ENCODE measurements at regions of chr3 and their contacts with region 1.

Region 1: GRCh38 chr3:31531992-31532586 is 636 bp upstream of the STT3B start:
- DNase-seq: peak; percentile 98
- H3K4me3 ChIP-seq: peak overlapping the region; percentile 79 to 95
- H3K27ac ChIP-seq: peak overlapping the region; percentile 96 to 99
- H3K4me1 ChIP-seq: peaks cover 3 to 10% of the 10 kb centered on the region in 2 experiments; a peak in 1 of 4 replicates
- H3K27me3 ChIP-seq: no peaks in the 10 kb centered on the region
- CTCF ChIP-seq: no peak; the same call in 1 of the 2 replicates
- EP300 ChIP-seq: peak; percentile 2 to 9; a peak in 1 of 4 replicates
- RAD21 ChIP-seq: no peak; the same call in 1 of the 2 replicates

Region 2: GRCh38 chr3:31472479-31473390 is 59.4 kb before region 1 on chr3:
- CTCF ChIA-PET with region 1: no interaction called
- POLR2A ChIA-PET with region 1: no interaction called
- DNase-seq: no peak
- H3K4me3 ChIP-seq: no peak overlapping the region
- H3K27ac ChIP-seq: no peak overlapping the region
- H3K4me1 ChIP-seq: no peaks in the 10 kb centered on the region
- H3K27me3 ChIP-seq: no peaks in the 10 kb centered on the region
- CTCF ChIP-seq: no peak
- EP300 ChIP-seq: no peak
- RAD21 ChIP-seq: no peak

Region 3: DNA sequence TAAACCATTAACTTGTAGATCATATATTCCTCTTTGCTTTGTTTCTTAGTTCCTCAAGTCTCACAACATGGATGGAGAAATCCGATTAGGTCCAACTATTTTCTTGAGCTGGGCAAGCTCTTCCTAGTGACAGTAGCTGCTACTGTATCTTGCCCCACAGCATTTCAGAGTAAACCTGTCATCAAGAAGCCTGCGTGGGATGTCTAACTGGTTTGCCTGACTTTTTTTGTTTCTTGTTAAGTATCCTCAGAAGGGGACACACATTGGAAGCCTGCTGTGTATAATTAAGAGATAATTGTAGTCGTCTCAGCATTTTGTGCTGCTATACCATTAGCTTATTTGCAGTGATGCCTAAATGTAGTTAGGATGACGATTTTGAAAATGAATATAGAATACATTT is 28.6 kb before region 1 on chr3:
- CTCF ChIA-PET with region 1: interaction called, 3 read pairs
- POLR2A ChIA-PET with region 1: interaction called, 13 read pairs
- DNase-seq: no peak
- H3K4me3 ChIP-seq: no peak overlapping the region
- H3K27ac ChIP-seq: no peak overlapping the region
- H3K4me1 ChIP-seq: no peaks in the 10 kb centered on the region; a peak in 1 of 4 replicates
- H3K27me3 ChIP-seq: 0 out of 2 replicates have a peak, but pooled peaks cover 6% of the 10 kb centered on the region
- CTCF ChIP-seq: no peak
- EP300 ChIP-seq: no peak
- RAD21 ChIP-seq: no peak

Region 4: DNA sequence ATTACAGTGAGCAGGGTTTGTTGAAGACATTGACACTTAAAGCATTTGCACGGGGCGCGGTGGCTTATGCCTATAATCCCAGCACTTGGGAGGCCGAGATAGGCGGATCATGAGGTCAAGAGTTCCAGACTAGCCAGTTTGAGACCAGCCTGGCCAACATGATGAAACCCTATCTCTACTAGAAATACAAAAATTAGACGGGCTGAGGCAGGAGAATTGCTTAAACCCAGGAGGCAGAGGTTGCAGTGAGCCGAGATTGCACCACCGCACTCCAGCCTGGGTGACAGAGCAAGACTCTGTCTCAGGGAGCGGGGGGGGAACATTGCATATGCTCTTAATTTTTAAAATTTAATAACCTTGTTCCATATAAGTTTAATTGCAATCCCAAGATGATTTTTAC is 12.5 kb after region 1 on chr3:
- CTCF ChIA-PET with region 1: interaction called, 12 read pairs
- POLR2A ChIA-PET with region 1: interaction called, 10 read pairs
- DNase-seq: no peak
- H3K4me3 ChIP-seq: no peak overlapping the region
- H3K27ac ChIP-seq: no peak overlapping the region
- H3K4me1 ChIP-seq: no peaks in the 10 kb centered on the region; a peak in 2 of 4 replicates
- H3K27me3 ChIP-seq: no peaks in the 10 kb centered on the region
- CTCF ChIP-seq: no peak
- EP300 ChIP-seq: no peak
- RAD21 ChIP-seq: no peak

Region 5: GRCh38 chr3:31550452-31551251 is 18.6 kb after region 1 on chr3:
- CTCF ChIA-PET with region 1: interaction called, 12 read pairs
- POLR2A ChIA-PET with region 1: interaction called, 10 read pairs
- DNase-seq: peak; percentile 43
- H3K4me3 ChIP-seq: no peak overlapping the region
- H3K27ac ChIP-seq: no peak overlapping the region; a peak in 1 of 4 replicates
- H3K4me1 ChIP-seq: peaks cover 0 to 3% of the 10 kb centered on the region in 2 experiments; a peak in 2 of 4 replicates
- H3K27me3 ChIP-seq: no peaks in the 10 kb centered on the region
- CTCF ChIP-seq: peak; percentile 78
- EP300 ChIP-seq: no peak
- RAD21 ChIP-seq: peak; percentile 70

Region 6: GRCh38 chr3:31671976-31672375 is 139.9 kb after region 1 on chr3:
- CTCF ChIA-PET with region 1: no interaction called
- POLR2A ChIA-PET with region 1: no interaction called
- DNase-seq: no peak
- H3K4me3 ChIP-seq: no peak overlapping the region
- H3K27ac ChIP-seq: no peak overlapping the region
- H3K4me1 ChIP-seq: no peaks in the 10 kb centered on the region; a peak in 1 of 4 replicates
- H3K27me3 ChIP-seq: no peaks in the 10 kb centered on the region
- CTCF ChIP-seq: no peak
- EP300 ChIP-seq: no peak
- RAD21 ChIP-seq: no peak